ENCODE measurements at regions of chr16 and their contacts with region 1.

Region 1: DNA sequence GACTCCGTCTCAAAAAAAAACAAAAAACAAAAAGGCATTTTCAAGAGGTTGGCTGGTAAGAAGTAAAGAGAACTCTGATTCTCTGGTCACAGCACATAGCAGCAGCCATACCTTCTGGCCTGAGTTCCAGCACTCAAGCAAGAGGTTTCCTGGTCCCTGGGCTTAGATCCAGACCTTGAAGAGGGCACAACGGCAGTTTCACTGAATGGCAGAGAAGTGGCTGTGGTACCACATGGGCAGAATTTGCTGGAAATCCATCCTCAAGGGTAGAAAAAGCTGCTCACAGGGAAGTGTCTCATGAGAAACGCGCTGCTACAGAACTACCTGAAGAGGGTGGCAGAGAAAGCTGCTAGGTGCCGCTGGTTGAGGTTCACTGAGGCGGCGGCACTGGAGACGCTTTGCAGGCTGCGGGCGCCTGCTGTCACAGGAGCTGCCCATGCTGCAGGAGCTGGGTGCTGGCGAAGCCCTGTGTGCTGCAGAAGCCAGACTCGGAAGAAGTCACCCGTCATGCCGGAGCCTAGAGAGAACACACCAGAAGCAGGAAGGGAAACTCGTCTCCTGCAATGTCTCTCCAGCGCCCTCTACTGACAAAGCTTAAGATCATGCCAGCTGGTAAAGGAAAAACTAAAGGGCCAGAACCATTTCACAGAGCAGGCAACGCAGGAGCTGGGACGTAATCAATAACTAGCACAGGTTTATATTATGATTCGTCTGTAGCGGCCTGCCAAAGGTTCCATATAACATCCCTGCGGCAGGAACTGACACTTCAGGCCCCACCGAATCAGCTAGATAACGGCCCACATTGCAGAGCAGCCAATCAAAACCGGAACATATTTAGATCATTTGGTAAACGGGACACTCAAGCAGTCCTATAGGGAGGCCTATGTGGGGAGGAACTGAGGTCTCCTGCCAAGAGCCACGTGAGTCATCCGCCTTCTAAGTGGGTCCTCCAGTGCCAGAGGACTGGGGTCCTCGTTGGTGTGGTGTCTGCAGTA is 5.4 kb upstream of the ZNF213 start:
- DNase-seq: peak; percentile 53 to 92 (median 88)
- ATAC-seq: peak; percentile 91
- H3K4me3 ChIP-seq: peak overlapping the region; percentile 69
- H3K4me3 Mint-ChIP-seq: peak overlapping the region; percentile 73 to 97 (median 93)
- H3K27ac ChIP-seq: peak overlapping the region; percentile 72
- H3K27ac Mint-ChIP-seq: peak overlapping the region; percentile 38 to 96 (median 85)
- H3K4me1 ChIP-seq: peaks cover 27 to 36% of the 10 kb centered on the region in 2 donors
- H3K4me1 Mint-ChIP-seq: peaks cover 22 to 67% (median 55%) of the 10 kb centered on the region in 7 donors
- H3K27me3 ChIP-seq: no peaks in the 10 kb centered on the region
- H3K27me3 Mint-ChIP-seq: no peaks in the 10 kb centered on the region

Region 2: DNA sequence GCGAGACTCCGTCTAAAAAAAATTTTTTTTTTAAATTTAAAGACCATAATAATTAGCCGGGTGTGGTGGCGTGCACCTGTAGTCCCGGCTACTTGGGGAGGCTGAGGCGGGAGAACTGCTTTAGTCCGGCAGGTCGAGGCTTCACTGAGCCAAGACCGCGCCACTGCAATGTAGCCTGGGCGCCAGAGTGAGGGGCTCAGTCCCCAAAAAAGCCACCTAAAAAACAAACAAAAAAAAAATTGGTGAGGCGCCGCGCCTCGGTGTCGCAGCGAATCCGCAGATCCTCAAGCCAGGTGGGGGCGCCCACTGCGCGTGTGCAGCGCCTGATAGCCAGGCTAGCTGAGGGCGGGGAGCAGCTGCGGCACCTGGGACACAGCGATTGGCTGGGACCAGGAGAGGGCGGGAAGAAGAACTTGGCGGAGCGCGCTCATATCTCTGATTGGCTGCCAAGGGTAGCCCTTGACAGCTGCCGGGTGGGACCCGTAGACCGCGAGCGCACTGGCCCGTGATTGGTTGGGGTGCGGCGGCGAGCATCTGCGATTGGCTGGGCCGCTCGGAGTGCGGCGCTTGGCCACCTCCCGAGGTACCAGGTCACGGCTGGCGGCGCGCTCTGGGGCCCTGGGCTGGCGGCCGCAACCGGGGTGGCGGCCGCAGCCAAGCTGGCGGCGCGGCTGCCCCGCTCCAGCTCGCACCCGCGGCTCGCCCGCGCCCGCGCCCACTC is 125.7 kb before region 1 on chr16:
- CTCF ChIA-PET with region 1: interaction called, 13 read pairs
- POLR2A ChIA-PET with region 1: interaction called, 11 read pairs
- intact Hi-C with region 1: loop called in 1 of 2 experiments (anchors 1 kb)
- DNase-seq: peak; percentile 78 to 98 (median 96)
- ATAC-seq: peak; percentile 99
- H3K4me3 ChIP-seq: no peak overlapping the region
- H3K4me3 Mint-ChIP-seq: peak overlapping the region; percentile 76 to 82 (median 80)
- H3K27ac ChIP-seq: no peak overlapping the region
- H3K27ac Mint-ChIP-seq: peak overlapping the region in 5 of 9 donors; percentile 41 to 81 (median 45)
- H3K4me1 ChIP-seq: peaks cover 19 to 21% of the 10 kb centered on the region in 2 donors
- H3K4me1 Mint-ChIP-seq: peaks cover 18 to 32% (median 25%) of the 10 kb centered on the region in 7 donors
- H3K27me3 ChIP-seq: no peaks in the 10 kb centered on the region
- H3K27me3 Mint-ChIP-seq: peaks cover 0 to 17% (median 0%) of the 10 kb centered on the region in 5 donors

Region 3: DNA sequence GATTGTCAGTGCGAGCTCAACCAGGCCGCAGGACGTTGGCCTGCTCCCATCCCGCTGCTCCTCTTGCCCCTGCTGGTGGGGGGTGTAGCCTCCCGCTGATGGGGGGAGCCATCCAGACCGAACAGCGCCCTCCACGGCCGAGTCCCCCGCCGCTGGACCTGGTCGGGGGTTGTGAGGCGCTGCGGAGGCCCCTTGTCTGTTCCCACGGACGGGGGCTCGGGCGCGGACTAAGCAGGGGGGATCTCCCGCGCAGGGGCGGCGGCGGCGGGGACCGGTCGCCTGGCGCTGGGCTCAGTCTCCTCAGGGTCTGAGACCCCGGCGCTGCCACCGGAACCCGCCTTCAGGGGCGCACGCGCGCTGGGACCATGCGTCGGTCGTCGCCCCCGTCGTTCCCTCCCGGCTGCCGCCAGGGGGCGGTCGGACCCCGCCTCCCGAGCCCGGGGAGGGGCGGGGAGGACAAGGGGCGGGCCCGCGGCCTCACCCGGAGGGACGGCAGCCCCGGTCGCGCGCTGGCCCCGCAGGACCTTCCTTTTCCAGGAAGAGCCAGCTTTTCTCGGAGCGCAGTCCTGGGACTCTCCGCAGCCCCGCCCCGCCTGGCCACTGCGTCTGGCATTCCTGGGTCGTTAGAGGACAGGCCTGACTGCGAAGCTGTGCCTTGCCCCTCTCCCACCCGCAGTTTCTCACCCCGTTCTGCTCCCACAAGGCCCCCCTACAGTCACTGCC is 70.3 kb before region 1 on chr16:
- CTCF ChIA-PET with region 1: interaction called, 244 read pairs
- POLR2A ChIA-PET with region 1: interaction called, 182 read pairs
- intact Hi-C with region 1: loop called (anchors 1 kb)
- DNase-seq: peak; percentile 76 to 97 (median 89)
- ATAC-seq: peak; percentile 95
- H3K4me3 ChIP-seq: peak overlapping the region; percentile 77
- H3K4me3 Mint-ChIP-seq: peak overlapping the region; percentile 79 to 95 (median 88)
- H3K27ac ChIP-seq: peak overlapping the region; percentile 89
- H3K27ac Mint-ChIP-seq: peak overlapping the region in 8 of 9 donors; percentile 72 to 91 (median 85)
- H3K4me1 ChIP-seq: peaks cover 25 to 46% of the 10 kb centered on the region in 2 donors
- H3K4me1 Mint-ChIP-seq: peaks cover 39 to 63% (median 47%) of the 10 kb centered on the region in 7 donors
- H3K27me3 ChIP-seq: no peaks in the 10 kb centered on the region
- H3K27me3 Mint-ChIP-seq: no peaks in the 10 kb centered on the region

Region 4: GRCh38 chr16:3087243-3088235 is 41.9 kb before region 1 on chr16:
- CTCF ChIA-PET with region 1: interaction called, 18 read pairs
- POLR2A ChIA-PET with region 1: interaction called, 3 read pairs
- intact Hi-C with region 1: no loop called
- DNase-seq: no peak
- ATAC-seq: peak; percentile 64
- H3K4me3 ChIP-seq: no peak overlapping the region
- H3K4me3 Mint-ChIP-seq: peak overlapping the region in 9 of 10 donors; percentile 32 to 76 (median 51)
- H3K27ac ChIP-seq: peak overlapping the region; percentile 22
- H3K27ac Mint-ChIP-seq: peak overlapping the region in 8 of 9 donors; percentile 14 to 88 (median 69)
- H3K4me1 ChIP-seq: peaks cover 12 to 26% of the 10 kb centered on the region in 2 donors
- H3K4me1 Mint-ChIP-seq: peaks cover 26 to 69% (median 56%) of the 10 kb centered on the region in 7 donors
- H3K27me3 ChIP-seq: no peaks in the 10 kb centered on the region
- H3K27me3 Mint-ChIP-seq: no peaks in the 10 kb centered on the region

Region 5: DNA sequence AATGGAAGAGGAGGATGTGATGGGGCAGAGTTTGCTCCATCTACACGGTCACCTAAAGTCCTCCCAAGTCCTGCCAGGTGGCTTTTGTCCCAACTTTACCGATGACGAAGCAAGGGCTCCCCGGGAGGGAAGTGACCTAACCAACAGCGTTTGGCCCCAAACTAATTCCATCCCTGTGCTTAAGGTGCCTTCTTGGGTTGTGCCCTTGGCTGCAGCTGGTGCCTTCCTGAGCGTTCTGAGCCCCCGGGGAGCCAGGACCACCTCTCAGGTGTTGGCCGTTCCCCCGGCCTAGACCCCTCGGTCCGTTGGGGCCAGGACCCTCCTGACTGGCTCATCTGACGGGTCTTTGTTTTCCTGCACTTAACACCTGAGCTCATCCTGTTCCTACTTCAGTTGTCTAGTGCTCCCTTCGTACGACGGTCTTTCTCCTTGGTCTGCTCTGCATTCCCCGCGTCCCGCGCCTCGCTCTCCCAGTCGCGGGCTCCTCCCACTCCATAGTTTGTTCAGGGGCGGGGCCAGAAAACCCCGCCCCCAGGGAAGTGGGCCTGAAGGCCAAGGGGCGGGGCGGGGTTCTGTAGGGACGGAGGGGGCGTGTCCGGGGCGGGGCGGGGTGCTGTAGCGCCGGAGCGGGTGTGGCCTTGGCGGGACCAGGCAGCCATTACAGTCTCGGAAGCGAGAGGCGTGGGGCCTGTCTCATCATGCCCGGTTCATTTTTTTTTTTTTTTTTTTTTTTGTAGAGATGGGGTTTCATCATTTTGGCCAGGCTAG is 29.5 kb before region 1 on chr16:
- CTCF ChIA-PET with region 1: interaction called, 233 read pairs
- POLR2A ChIA-PET with region 1: interaction called, 40 read pairs
- intact Hi-C with region 1: loop called (anchors 1 kb)
- DNase-seq: peak; percentile 67 to 94 (median 75)
- ATAC-seq: peak; percentile 94
- H3K4me3 ChIP-seq: peak overlapping the region; percentile 46
- H3K4me3 Mint-ChIP-seq: peak overlapping the region; percentile 71 to 98 (median 82)
- H3K27ac ChIP-seq: peak overlapping the region; percentile 35
- H3K27ac Mint-ChIP-seq: peak overlapping the region; percentile 74 to 93 (median 86)
- H3K4me1 ChIP-seq: peaks cover 25 to 31% of the 10 kb centered on the region in 2 donors
- H3K4me1 Mint-ChIP-seq: peaks cover 27 to 65% (median 54%) of the 10 kb centered on the region in 7 donors
- H3K27me3 ChIP-seq: no peaks in the 10 kb centered on the region
- H3K27me3 Mint-ChIP-seq: no peaks in the 10 kb centered on the region

Region 6: GRCh38 chr16:3118204-3118806 is 11.1 kb before region 1 on chr16:
- CTCF ChIA-PET with region 1: interaction called, 6 read pairs
- POLR2A ChIA-PET with region 1: interaction called, 14 read pairs
- intact Hi-C with region 1: no loop called
- DNase-seq: no peak
- ATAC-seq: no peak
- H3K4me3 ChIP-seq: no peak overlapping the region
- H3K4me3 Mint-ChIP-seq: no peak overlapping the region
- H3K27ac ChIP-seq: no peak overlapping the region
- H3K27ac Mint-ChIP-seq: no peak overlapping the region
- H3K4me1 ChIP-seq: no peaks in the 10 kb centered on the region
- H3K4me1 Mint-ChIP-seq: peaks cover 0 to 9% (median 3%) of the 10 kb centered on the region in 7 donors
- H3K27me3 ChIP-seq: no peaks in the 10 kb centered on the region
- H3K27me3 Mint-ChIP-seq: peaks cover 0 to 4% (median 0%) of the 10 kb centered on the region in 5 donors

Region 7: DNA sequence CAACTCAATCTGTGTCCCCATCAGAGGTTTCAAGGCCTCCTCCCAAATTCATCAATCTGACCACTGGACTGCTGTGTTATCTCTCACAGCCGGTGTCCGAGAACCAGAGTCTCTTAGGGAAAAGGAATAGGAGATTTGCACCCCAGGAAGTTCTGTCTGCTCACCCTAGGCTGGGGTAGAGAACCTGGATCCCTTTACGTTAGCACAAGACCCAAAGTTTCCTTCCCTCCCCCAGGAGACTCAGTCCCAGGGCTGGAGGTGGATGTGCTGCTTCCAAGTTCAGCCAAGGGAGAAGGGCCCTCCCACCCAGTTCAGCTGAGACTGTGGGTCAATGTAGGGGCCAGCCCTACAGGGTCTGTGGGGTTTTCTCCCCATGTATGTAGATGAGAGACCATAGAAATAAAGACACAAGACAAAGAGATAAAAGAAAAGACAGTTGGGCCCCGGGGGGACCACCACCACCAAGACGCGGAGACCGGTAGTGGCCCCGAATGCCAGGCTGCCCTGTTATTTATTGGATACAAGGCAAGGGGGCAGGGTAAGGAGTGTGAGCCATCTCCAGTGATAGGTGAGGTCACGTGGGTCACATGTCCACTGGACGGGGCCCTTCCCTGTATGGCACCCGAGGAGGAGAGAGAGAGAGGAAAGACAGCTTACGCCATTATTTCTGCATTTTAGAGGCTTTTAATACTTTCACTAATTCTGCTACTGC is 35.8 kb after region 1 on chr16:
- CTCF ChIA-PET with region 1: interaction called, 14 read pairs
- POLR2A ChIA-PET with region 1: interaction called, 95 read pairs
- intact Hi-C with region 1: loop called (anchors 1 kb)
- DNase-seq: no peak
- ATAC-seq: no peak
- H3K4me3 ChIP-seq: no peak overlapping the region
- H3K4me3 Mint-ChIP-seq: peak overlapping the region; percentile 39 to 80 (median 58)
- H3K27ac ChIP-seq: peak overlapping the region; percentile 55
- H3K27ac Mint-ChIP-seq: peak overlapping the region; percentile 36 to 93 (median 71)
- H3K4me1 ChIP-seq: peaks cover under 1 to 4% of the 10 kb centered on the region in 2 donors
- H3K4me1 Mint-ChIP-seq: peaks cover 9 to 24% (median 10%) of the 10 kb centered on the region in 7 donors
- H3K27me3 ChIP-seq: no peaks in the 10 kb centered on the region
- H3K27me3 Mint-ChIP-seq: peaks cover 0 to 27% (median 0%) of the 10 kb centered on the region in 5 donors

Region 8: GRCh38 chr16:3198334-3199072 is 69.1 kb after region 1 on chr16:
- CTCF ChIA-PET with region 1: no interaction called
- POLR2A ChIA-PET with region 1: no interaction called
- intact Hi-C with region 1: no loop called
- DNase-seq: no peak
- ATAC-seq: no peak
- H3K4me3 ChIP-seq: no peak overlapping the region
- H3K4me3 Mint-ChIP-seq: peak overlapping the region in 1 of 10 donors; percentile 46
- H3K27ac ChIP-seq: no peak overlapping the region
- H3K27ac Mint-ChIP-seq: no peak overlapping the region
- H3K4me1 ChIP-seq: no peaks in the 10 kb centered on the region
- H3K4me1 Mint-ChIP-seq: peaks cover 0 to 10% (median 9%) of the 10 kb centered on the region in 7 donors
- H3K27me3 ChIP-seq: peaks cover 9 to 17% of the 10 kb centered on the region in 2 donors
- H3K27me3 Mint-ChIP-seq: peaks cover 17 to 35% (median 29%) of the 10 kb centered on the region in 5 donors